Cardiac septum (tissue), 1 donor: ENCODE measurements at regions of chr4 and their contacts with region 1.

Region 1: GRCh38 chr4:72505314-72505744 is 63.7 kb downstream of the ADAMTS3 start:
- DNase-seq: no peak

Region 2: DNA sequence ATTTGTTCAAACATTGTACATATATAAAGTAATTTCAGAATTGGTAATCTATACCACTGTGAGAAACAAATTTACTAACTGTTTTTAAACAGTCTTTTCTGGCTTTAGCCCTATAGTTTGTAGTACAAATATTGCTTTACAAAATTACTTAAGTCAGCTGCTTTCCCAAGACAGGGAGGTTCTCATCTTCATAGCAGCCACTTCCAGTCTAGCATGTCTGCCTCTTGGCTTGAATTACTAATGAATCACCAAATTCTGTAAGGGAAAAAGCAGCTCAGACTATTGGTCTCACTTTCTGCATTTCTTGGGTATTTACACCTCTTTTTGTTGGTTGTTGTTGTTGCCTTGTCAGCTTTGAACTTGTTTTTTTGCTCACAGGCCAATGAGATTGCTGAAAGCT is 286.4 kb before region 1 on chr4:
- intact Hi-C with region 1: no loop called
- DNase-seq: no peak

Region 3: DNA sequence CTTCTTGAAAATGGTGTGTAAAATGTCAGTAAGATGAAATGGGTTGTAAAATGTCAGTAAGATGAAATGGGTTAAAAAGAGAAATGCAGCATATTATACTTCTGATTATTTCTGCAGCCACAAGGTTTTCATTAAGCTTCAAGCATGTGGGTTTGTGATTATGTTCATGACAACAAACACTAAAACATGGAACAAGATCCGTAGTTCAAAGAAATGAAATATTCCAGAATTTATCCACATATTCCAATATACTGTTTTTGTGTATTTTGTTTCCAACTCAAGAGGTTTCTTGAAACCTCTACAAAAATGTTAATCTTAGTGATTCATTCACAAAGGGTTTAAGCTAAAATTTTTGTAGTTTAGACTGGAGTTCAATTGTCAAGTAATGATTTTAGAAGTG is 20.3 kb before region 1 on chr4:
- intact Hi-C with region 1: no loop called
- DNase-seq: no peak

Region 4: DNA sequence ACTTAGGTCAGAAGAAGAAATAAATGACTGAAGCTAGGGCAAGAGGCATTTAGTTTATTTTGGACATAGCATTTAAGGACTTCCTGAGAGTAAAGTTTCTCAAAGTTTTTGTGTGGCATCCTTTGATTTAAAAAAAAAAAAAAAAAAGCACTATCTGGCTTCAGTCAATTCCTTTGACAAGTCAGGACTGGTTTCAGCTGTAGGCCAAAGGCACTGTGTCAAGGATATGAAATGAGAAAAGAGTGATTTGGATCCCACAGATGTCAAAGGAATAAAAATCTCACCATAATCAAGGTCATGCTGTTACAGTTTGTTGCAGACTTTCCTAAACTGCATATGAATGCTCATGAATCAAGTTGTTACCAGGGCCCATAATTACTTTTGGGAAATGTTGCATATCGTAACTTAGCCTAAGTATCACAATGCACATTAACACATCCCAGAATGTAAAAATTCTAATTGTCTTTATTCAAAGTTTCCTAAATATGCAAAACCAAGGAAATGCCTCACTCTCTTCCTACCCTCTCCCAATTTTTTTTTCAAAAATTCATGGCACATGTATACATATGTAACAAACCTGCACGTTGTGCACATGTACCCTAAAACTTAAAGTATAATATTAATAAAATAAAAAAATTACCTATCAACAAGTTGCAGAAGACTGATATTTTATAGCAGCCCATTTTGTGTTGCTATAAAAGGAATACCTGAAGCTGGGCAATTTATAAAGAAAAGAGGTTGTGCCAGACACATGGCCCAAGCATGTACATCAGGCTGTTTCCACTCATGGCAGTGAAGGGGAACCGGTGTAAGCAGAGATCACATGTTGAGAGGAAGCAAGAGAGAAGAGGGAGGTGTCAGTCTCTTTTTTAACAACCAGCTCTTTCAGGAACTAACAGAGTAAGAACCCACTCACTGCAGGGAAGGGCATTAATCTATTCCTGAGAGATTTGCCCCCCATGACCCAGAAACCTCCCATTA is 97.4 kb after region 1 on chr4:
- intact Hi-C with region 1: no loop called
- DNase-seq: no peak

Region 5: GRCh38 chr4:72701987-72702819 is 196.9 kb after region 1 on chr4:
- intact Hi-C with region 1: loop called (anchors 10 kb)
- DNase-seq: no peak

Region 6: GRCh38 chr4:72886602-72887001 is 381.3 kb after region 1 on chr4:
- intact Hi-C with region 1: loop called (anchors 10 kb)
- DNase-seq: no peak

Region 7: DNA sequence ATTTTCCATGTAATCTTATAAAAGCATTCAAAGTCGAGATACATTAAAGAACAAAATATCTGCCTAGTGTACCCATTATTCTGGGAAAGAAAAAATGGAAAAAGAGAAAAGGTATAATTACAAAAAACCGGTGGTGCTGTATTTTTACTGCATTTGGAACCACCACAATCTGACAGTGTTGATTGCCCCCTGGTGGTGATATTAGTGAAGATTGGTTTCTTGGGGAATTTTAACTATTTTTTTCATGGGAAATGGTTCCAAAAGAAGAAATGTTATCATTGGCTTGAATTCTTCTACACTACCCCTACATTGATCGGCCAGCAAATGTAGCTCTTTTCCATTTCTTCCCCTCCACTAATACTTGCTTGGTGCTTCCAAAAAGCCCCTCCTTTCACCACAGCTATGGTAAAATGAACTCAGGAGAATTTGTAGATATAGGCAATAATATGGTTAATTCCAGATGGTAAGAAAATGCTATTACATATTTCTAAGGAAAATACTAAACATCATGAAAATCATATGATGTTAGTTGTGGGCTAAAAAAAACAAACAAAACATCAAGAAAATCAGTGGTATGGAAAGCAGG is 514.2 kb after region 1 on chr4:
- intact Hi-C with region 1: loop called (anchors 2 kb)
- DNase-seq: no peak